OCI-LY7 (cell line): ENCODE measurements at regions of chrX and their contacts with region 1.

Region 1: DNA sequence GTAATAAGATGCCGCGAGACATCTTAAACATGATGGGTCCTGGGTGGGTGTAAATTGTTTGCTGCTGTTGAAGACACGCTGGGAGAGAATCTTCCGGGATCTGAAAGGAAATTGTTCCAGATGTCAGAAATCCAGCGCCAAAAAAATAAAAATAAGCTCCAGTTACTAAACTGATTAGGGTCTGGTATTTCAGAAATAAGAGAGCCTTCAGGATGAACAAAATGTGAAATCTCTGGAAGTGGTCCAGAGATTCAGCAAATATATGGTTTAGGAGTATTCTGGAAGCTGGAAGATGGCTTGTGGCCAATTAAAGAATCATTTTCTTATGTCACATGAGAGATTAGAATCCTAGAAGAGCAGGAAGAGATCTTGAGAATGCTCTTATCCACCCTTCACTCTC is 75.8 kb upstream of the NHS start:
- DNase-seq: no peak
- H3K4me3 ChIP-seq: no peak overlapping the region
- H3K27ac ChIP-seq: no peak overlapping the region
- H3K4me1 ChIP-seq: no peaks in the 10 kb centered on the region
- CTCF ChIP-seq: no peak

Region 2: GRCh38 chrX:16903274-16904022 is 395.8 kb before region 1 on chrX:
- CTCF ChIA-PET with region 1: no interaction called
- POLR2A ChIA-PET with region 1: interaction called, 10 read pairs
- intact Hi-C with region 1: no loop called
- DNase-seq: peak; percentile 39
- H3K4me3 ChIP-seq: peak overlapping the region; percentile 31
- H3K27ac ChIP-seq: peak overlapping the region; percentile 70
- H3K4me1 ChIP-seq: peaks cover 21% of the 10 kb centered on the region
- CTCF ChIP-seq: no peak

Region 3: DNA sequence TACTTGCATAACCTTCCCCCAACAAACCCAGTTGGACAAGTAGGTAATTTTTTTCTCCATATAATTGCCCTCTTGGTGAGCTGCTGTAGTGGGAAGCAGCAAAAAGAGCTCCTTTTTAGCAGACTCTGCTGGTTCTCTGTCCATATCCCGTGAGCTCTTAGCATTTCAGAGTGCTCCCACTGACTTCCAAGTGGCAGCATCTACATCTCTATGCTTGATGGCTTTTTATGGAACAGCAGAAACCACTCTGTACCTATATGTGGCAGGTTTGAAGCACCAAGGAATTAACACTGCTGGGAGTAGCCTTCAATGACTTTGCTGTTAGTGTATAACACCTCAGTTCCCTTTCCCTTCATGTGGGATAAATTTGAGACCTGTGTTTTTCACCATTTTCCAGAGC is 92.6 kb before region 1 on chrX:
- CTCF ChIA-PET with region 1: no interaction called
- POLR2A ChIA-PET with region 1: no interaction called
- intact Hi-C with region 1: no loop called
- DNase-seq: no peak
- H3K4me3 ChIP-seq: no peak overlapping the region
- H3K27ac ChIP-seq: no peak overlapping the region
- H3K4me1 ChIP-seq: no peaks in the 10 kb centered on the region
- CTCF ChIP-seq: no peak

Region 4: DNA sequence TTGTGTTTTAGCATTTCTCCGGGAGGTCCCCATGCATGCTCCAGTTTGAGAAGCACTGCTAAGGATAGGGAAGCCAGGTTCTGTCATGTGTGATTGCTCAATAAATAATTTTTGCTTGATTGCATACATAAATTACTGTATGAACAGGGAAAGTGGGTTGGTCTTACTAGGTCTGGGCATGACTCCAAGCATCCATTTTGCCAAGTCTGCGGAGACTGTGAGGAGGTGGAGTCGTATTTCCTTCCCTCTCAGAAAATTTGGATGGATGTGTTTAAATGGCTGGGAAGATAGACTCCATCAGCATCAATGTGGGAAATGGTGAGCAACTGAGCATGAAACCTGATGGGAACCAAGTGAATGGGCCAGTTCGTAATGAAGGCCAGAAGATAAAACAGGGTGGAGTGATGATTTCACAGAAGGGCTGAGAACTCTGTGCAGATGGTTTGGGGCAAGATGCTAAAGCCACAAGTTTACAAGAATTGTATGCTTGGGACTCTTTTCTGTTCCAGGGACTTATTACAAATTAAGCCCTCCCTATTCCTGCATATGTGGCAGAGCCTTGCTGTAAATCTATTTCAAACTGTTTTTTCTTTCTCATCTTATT is 159.9 kb after region 1 on chrX:
- CTCF ChIA-PET with region 1: no interaction called
- POLR2A ChIA-PET with region 1: no interaction called
- intact Hi-C with region 1: no loop called
- DNase-seq: no peak
- H3K4me3 ChIP-seq: no peak overlapping the region
- H3K27ac ChIP-seq: no peak overlapping the region
- H3K4me1 ChIP-seq: no peaks in the 10 kb centered on the region
- CTCF ChIP-seq: no peak